CD8-positive, alpha-beta T cell (primary cell): ENCODE measurements at regions of chr17 and their contacts with region 1.

Region 1: DNA sequence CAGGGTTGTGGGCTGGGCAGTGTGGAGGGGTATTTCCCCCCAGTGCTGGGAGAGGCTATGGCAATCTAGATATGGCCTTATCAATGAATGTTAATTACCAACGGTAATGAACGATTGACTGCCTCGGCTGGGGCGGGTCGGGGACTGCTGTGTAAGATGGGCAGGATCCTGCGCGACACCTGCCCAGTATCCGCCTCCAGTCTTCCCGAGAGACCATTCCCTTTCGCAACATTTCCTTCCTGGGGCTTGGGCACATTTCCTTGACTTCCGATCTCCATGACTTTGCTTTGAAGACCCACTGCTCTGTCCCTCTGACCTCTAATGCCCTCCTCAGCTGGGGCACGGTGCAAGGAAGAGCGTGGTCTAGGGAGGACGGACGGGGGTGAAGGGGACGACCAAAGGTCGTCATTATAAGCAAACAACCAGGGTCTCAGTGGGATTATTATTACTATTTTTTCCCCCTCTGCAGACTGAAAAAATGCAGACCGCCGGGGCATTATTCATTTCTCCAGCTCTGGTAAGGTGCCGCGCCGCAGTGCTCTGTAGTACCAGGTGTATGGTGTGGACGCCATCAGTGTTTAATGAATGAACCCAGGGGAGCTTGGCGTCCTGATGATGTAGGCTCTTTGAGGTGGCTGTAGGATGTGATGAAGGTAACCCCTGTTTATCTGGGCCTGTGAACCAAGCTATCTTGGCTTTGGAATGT is 506 bp downstream of the ATP5MC1 start:
- DNase-seq: peak in 3 of 9 experiments; percentile 33 to 50 (median 38)
- ATAC-seq: no peak
- H3K4me3 ChIP-seq: peak overlapping the region; percentile 52 to 63
- H3K4me3 Mint-ChIP-seq: peak overlapping the region; percentile 93
- H3K27ac ChIP-seq: peak overlapping the region; percentile 55 to 91
- H3K27ac Mint-ChIP-seq: peak overlapping the region; percentile 99
- H3K4me1 ChIP-seq: peaks cover 15% of the 10 kb centered on the region
- H3K4me1 Mint-ChIP-seq: peaks cover 23% of the 10 kb centered on the region
- H3K27me3 ChIP-seq: no peaks in the 10 kb centered on the region
- H3K27me3 Mint-ChIP-seq: no peaks in the 10 kb centered on the region
- CTCF ChIP-seq: no peak

Region 2: GRCh38 chr17:48107168-48108132 is 785.6 kb before region 1 on chr17 and contains the start of gene SNX11:
- CTCF ChIA-PET with region 1: no interaction called
- POLR2A ChIA-PET with region 1: no interaction called
- intact Hi-C with region 1: loop called (anchors 10 kb)
- DNase-seq: peak; percentile 80 to 97 (median 92)
- ATAC-seq: peak; percentile 93
- H3K4me3 ChIP-seq: peak within 1 kb of the TSS; percentile 70 to 91
- H3K4me3 Mint-ChIP-seq: peak within 1 kb of the TSS; percentile 98
- H3K27ac ChIP-seq: peak within 1 kb of the TSS; percentile 78 to 82
- H3K27ac Mint-ChIP-seq: peak within 1 kb of the TSS; percentile 88
- H3K4me1 ChIP-seq: peaks cover 37% of the 10 kb centered on the region
- H3K4me1 Mint-ChIP-seq: peaks cover 60% of the 10 kb centered on the region
- H3K27me3 ChIP-seq: no peaks in the 10 kb centered on the region
- H3K27me3 Mint-ChIP-seq: no peaks in the 10 kb centered on the region
- CTCF ChIP-seq: no peak
- total RNA-seq, gene SNX11: 15.3 to 16.3 TPM

Region 3: DNA sequence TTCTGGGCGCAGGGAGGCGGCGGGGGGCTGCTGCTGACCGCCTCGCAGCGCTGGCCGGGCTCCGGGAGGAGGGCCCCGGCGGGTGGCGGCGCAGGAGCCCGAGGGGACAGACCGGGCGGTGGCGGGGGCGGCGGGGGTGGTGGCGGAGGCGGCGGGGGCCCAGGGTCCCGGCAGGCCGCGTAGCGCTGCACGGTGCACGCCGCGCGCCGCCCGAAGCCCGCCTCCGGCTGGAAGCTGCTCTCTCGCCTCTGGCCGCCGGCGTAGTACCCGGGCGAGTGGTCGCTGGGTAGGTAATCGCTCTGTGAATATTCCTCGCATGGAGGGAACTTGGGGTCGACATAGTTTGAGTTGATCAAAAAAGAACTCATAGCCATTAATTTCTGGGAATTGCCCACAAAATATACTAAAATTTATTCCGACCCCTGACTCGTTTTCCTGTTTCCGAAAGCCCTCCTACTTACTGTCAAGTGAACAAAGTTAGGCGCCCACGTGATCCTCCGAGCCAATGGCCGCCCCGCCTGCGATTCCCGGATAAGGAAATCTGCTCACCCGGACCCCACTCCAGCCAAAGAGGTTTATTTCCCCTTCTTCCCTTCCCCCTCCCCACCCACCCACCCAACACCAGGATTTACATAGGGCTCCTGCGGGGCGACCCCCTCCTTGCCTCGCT is 315.0 kb before region 1 on chr17 and contains the start of gene HOXB4:
- CTCF ChIA-PET with region 1: no interaction called
- POLR2A ChIA-PET with region 1: no interaction called
- intact Hi-C with region 1: no loop called
- DNase-seq: peak; percentile 35 to 87 (median 72)
- ATAC-seq: peak; percentile 76
- H3K4me3 ChIP-seq: peak within 1 kb of the TSS; percentile 80 to 87
- H3K4me3 Mint-ChIP-seq: peak within 1 kb of the TSS; percentile 90
- H3K27ac ChIP-seq: peak within 1 kb of the TSS in 1 of 2 experiments; percentile 75
- H3K27ac Mint-ChIP-seq: peak within 1 kb of the TSS; percentile 86
- H3K4me1 ChIP-seq: peaks cover 25% of the 10 kb centered on the region
- H3K4me1 Mint-ChIP-seq: peaks cover 40% of the 10 kb centered on the region
- H3K27me3 ChIP-seq: peaks cover 26 to 39% of the 10 kb centered on the region in 2 experiments
- H3K27me3 Mint-ChIP-seq: peaks cover 40% of the 10 kb centered on the region
- CTCF ChIP-seq: no peak
- total RNA-seq, gene HOXB4: 0.57 to 0.64 TPM

Region 4: GRCh38 chr17:48908047-48908843 is 15.2 kb after region 1 on chr17 and contains the start of gene UBE2Z:
- CTCF ChIA-PET with region 1: interaction called, 5 read pairs
- POLR2A ChIA-PET with region 1: interaction called, 45 read pairs
- intact Hi-C with region 1: loop called (anchors 1 kb)
- DNase-seq: peak; percentile 79 to 96 (median 88)
- ATAC-seq: peak; percentile 87
- H3K4me3 ChIP-seq: peak within 1 kb of the TSS; percentile 74 to 77
- H3K4me3 Mint-ChIP-seq: peak within 1 kb of the TSS; percentile 95
- H3K27ac ChIP-seq: peak within 1 kb of the TSS; percentile 88 to 95
- H3K27ac Mint-ChIP-seq: peak within 1 kb of the TSS; percentile 99
- H3K4me1 ChIP-seq: peaks cover 39% of the 10 kb centered on the region
- H3K4me1 Mint-ChIP-seq: peaks cover 49% of the 10 kb centered on the region
- H3K27me3 ChIP-seq: no peaks in the 10 kb centered on the region
- H3K27me3 Mint-ChIP-seq: no peaks in the 10 kb centered on the region
- CTCF ChIP-seq: no peak
- total RNA-seq, gene UBE2Z: 56.4 to 56.7 TPM

Region 5: GRCh38 chr17:48997083-48997826 is 104.2 kb after region 1 on chr17 and contains the start of gene IGF2BP1:
- CTCF ChIA-PET with region 1: no interaction called
- POLR2A ChIA-PET with region 1: no interaction called
- intact Hi-C with region 1: loop called in 1 of 2 experiments (anchors 5 kb)
- DNase-seq: peak in 3 of 9 experiments; percentile 34 to 51 (median 45)
- ATAC-seq: peak; percentile 21
- H3K4me3 ChIP-seq: peak within 1 kb of the TSS; percentile 3 to 29
- H3K4me3 Mint-ChIP-seq: peak within 1 kb of the TSS; percentile 65
- H3K27ac ChIP-seq: no peak within 1 kb of the TSS
- H3K27ac Mint-ChIP-seq: no peak within 1 kb of the TSS
- H3K4me1 ChIP-seq: peaks cover 31% of the 10 kb centered on the region
- H3K4me1 Mint-ChIP-seq: peaks cover 28% of the 10 kb centered on the region
- H3K27me3 ChIP-seq: peaks cover 79 to 80% of the 10 kb centered on the region in 2 experiments
- H3K27me3 Mint-ChIP-seq: peaks cover 80% of the 10 kb centered on the region
- CTCF ChIP-seq: no peak
- total RNA-seq, gene IGF2BP1: not detected